Posterior vena cava (tissue), 2 donors: ENCODE measurements at regions of chr1 and their contacts with region 1.

Region 1: DNA sequence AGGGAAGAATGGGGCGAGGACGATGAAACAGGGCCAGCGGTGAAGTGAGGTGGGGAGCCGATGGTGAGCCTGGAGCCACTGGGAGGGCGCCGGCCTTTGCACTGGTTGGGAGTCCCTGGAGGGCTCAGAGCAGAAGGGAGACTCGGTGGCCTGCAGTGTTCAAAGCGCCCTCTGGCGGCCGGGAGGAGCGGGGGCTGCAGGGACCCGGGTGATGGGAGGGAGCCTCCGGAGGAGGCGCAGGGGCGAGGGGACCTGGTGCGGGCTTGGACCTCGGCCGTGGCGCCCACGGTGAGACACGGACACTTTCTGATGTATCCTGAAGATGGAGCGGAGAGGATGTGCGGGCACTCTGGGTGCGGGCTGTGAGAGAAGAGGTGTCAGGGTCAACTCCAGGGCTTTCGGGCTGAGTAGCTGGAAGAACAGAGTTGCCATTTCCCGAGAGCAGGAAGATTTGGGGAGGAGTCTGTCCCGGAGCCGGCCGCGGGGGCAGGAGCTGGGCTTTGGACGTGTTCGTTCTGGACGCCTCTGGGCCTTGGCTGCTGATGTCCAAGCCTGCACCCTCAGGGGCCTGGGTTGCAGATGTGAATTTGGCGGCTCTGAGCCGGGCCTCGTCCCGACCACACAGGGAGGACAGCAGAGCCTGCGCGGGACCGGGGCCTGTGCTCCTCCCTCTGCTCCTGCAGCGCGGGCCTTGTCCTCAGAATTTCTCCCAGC is 29.7 kb downstream of the HEYL start:
- DNase-seq: peak; percentile 94

Region 2: GRCh38 chr1:39625462-39626273 is 15.9 kb after region 1 on chr1:
- intact Hi-C with region 1: no loop called
- DNase-seq: peak; percentile 97

Region 3: GRCh38 chr1:39653546-39654031 is 43.8 kb after region 1 on chr1:
- intact Hi-C with region 1: loop called (anchors 5 kb)
- DNase-seq: peak; percentile 94

Region 4: GRCh38 chr1:39707506-39707905 is 97.7 kb after region 1 on chr1:
- intact Hi-C with region 1: loop called in 1 of 2 experiments (anchors 5 kb)
- DNase-seq: no peak

Region 5: GRCh38 chr1:39720094-39720999 is 110.6 kb after region 1 on chr1:
- intact Hi-C with region 1: loop called in 1 of 2 experiments (anchors 10 kb)
- DNase-seq: no peak

Region 6: DNA sequence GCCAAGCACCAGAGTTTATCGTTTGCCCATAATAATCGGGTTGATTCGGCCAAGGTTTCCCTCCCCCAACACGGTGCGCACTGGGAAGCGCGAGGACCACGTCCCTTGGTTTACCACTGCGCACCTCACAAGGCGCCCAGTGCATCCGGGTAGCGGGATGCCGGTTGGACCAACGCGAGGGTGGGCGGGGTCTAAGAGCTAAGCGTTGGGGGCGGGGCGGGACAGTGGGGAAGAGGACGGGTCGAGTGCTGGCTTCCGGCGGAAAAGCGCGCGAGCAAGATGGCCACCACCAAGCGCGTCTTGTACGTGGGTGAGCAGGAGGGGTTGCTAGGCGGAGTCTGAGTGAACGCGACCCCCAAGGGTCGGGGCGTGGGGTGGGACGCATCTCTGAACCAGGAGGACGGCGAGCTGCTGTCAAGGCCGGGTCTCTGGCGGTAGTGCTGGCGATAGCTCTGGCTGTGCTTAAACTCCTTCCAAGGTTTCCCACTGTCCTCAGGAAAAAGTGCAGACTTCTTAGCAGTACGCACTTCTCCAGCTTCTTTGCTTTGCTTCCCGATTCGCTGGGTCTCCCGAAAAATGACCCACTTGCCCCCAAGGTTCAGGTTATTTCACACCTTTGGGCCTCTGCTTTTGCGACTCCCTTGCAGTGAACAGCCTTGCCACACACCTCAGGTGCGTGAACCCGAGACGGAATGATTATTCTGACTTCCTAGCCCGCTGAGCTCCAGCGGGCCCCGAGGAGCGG is 129.0 kb after region 1 on chr1 and contains the start of gene PPIE:
- intact Hi-C with region 1: no loop called
- DNase-seq: peak; percentile 99
- total RNA-seq, gene PPIE: 29.0 to 45.9 TPM